MCF 10A (cell line): ENCODE measurements at regions of chr9 and their contacts with region 1.

Region 1: DNA sequence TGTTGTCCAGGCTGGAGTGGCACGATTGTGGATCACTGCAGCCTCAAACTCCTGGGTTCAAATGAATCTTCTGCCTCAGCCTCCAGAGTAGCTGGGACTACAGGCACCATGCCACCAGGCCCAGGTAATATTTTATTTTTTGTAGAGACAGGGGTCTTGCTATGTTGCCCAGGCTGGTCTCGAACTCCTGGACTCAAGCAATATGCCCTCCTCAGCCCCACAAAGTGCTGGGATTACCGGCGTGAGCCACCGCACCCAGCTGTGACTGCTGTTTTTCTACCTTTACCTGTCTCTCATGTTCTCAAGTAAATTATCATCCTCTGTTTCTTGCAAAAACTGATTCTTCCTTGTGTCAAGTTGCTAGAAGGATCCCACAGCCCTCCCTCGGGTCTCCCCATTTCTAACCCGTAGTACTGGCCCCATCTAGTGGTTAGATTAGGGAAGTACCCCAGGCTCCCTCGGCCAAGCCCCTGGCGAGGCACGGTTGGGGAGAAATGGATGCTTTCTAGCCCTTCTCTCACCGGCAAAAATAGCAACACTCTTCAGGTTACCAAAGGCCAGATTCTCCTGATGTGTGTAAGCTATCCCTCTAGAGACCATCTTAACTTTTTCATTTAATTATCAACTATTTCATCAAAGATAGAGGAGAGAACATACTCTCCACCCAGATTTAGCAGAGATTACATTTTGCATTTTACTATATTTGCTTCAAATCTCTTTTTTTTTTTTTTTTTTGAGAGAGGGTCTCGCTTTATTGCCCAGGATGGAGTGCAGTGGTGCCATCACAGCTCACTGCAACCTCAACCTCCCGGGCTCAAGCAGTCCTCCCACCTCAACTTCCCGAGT is 19.2 kb upstream of the TOR1B start:
- DNase-seq: peak; percentile 82
- H3K4me3 Mint-ChIP-seq: no peak overlapping the region
- H3K27ac Mint-ChIP-seq: no peak overlapping the region
- H3K4me1 Mint-ChIP-seq: peaks cover 13% of the 10 kb centered on the region
- H3K27me3 Mint-ChIP-seq: peaks cover 8% of the 10 kb centered on the region
- CTCF ChIP-seq: peak; percentile 95

Region 2: GRCh38 chr9:129641746-129642513 is 141.8 kb before region 1 on chr9 and contains the start of gene ASB6:
- CTCF ChIA-PET with region 1: interaction called, 45 read pairs
- POLR2A ChIA-PET with region 1: interaction called, 3 read pairs
- intact Hi-C with region 1: loop called (anchors 1 kb)
- DNase-seq: peak; percentile 93
- H3K4me3 Mint-ChIP-seq: peak within 1 kb of the TSS; percentile 87
- H3K27ac Mint-ChIP-seq: peak within 1 kb of the TSS; percentile 79
- H3K4me1 Mint-ChIP-seq: peaks cover 12% of the 10 kb centered on the region
- H3K27me3 Mint-ChIP-seq: no peaks in the 10 kb centered on the region
- CTCF ChIP-seq: peak; percentile 97
- total RNA-seq, gene ASB6: 14.4 TPM in 2 replicates

Region 3: DNA sequence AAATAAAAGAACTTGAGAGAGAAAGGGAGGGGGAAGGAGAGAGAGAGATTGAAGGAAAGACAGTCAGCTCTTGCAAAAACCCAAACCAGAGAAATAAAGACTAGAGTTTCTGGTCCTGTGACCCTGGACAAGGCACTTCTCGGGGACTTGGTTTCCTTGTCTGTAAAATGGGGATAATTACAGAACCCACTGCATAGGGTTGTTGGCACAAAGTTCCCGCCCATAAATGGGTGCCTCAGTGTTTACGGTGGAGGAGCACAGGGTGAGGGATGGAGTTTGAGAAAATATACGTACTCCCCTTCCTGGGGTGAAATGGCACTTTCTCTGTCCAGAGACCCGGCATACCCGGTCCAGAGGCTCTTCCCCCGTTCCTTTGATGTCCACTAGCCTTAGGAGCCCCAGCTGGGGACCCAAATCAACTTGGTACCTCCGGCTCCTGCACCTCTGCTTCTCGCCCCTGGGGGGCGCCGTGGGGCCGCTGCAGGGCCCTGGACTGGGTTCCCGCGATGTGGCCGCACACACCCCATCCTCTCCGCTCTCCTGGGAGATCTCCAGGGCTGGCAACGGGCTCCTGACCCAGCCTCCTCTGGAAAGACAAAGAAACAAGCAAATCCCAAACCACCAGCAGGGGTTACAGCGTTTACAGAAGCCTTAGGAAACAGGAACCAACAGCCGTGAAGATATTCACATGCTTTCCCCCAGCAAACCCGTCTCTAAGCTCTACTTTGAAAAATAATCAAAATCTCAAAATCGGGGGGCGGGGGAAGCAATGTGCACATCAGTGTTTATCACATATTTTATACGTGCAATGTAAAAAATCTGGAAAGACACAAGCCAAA is 57.2 kb before region 1 on chr9:
- CTCF ChIA-PET with region 1: interaction called, 105 read pairs
- POLR2A ChIA-PET with region 1: interaction called, 9 read pairs
- intact Hi-C with region 1: loop called (anchors 1 kb)
- DNase-seq: peak; percentile 79
- H3K4me3 Mint-ChIP-seq: no peak overlapping the region
- H3K27ac Mint-ChIP-seq: no peak overlapping the region
- H3K4me1 Mint-ChIP-seq: no peaks in the 10 kb centered on the region
- H3K27me3 Mint-ChIP-seq: no peaks in the 10 kb centered on the region
- CTCF ChIP-seq: peak; percentile 92

Region 4: DNA sequence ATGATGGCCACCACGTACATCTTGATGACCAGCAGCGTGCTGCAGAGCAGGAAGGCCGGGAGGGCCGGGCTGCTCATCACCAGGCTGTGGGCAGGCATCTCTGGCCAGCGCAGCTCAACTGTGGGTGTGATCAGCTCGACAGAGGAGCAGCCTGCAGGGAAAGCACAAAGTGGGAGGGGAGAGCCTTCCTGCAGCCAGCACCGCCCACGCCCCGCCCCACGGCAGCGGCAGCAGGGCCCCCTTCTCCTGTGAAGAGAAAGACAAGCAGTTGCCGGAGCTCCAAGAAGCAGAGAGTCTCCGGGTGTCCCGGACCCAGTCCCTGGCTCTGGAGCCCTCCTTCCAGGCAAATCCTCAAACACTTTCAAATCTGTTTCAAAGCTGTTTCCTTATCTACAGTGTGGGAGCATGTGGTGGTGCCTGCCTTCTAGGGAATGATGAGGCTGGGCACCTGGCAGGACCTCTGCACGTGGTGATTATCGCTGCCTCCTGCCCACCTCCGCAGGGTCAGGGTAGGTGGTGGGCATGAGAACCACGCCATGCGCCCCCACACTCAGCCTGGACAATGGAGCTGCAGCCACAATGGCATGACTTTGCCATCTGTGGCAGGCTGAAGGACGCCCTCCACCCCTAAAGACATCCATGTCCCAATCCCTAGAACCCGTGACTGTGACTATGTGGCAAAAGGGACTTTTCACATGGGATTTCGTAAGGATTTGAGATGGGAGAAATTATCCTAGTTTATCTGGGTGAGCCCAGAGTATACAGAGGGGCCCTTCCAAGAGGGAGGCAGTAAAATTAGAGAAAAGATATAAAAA is 30.6 kb before region 1 on chr9 and contains the start of gene PTGES:
- CTCF ChIA-PET with region 1: interaction called, 30 read pairs
- POLR2A ChIA-PET with region 1: interaction called, 293 read pairs
- intact Hi-C with region 1: no loop called
- DNase-seq: peak; percentile 90
- H3K4me3 Mint-ChIP-seq: peak within 1 kb of the TSS; percentile 93
- H3K27ac Mint-ChIP-seq: peak within 1 kb of the TSS; percentile 82
- H3K4me1 Mint-ChIP-seq: peaks cover 22% of the 10 kb centered on the region
- H3K27me3 Mint-ChIP-seq: no peaks in the 10 kb centered on the region
- CTCF ChIP-seq: no peak
- total RNA-seq, gene PTGES: 74.0 and 96.6 TPM in 2 replicates

Region 5: DNA sequence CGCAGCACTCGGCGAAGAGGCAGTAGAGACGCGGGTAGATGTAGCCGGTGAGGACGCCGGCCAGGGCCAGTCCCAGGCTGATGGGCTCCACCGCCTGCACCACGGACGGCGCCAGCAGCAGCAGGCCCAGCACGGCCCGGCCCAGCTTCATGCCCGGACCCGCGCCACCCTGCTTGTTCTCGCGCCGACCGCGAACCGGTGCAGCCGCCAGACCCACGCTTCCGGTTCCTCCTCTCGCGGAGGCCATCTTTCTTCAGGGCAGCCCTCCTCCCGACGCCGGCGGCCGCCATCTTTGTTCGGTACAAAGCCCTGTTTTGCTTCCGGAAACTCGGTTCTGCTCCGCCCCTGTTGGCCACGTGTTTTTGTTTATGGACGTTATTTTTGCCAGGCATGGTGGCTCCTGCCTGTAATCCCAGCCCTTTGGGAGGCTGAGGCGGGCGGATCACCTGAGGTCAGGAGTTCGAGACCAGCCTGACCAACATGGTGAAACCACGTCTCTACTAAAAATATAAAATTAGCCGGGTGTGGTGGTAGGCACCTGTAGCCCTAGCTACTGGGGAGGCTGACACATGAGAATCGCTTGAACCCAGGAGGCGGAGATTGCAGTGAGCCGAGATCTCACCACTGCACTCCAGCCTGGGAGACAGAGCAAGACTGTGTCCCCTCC is 40.3 kb after region 1 on chr9 and contains the start of gene TOR1A:
- CTCF ChIA-PET with region 1: no interaction called
- POLR2A ChIA-PET with region 1: no interaction called
- intact Hi-C with region 1: no loop called
- DNase-seq: peak; percentile 94
- H3K4me3 Mint-ChIP-seq: peak within 1 kb of the TSS; percentile 76
- H3K27ac Mint-ChIP-seq: peak within 1 kb of the TSS; percentile 77
- H3K4me1 Mint-ChIP-seq: no peaks in the 10 kb centered on the region
- H3K27me3 Mint-ChIP-seq: no peaks in the 10 kb centered on the region
- CTCF ChIP-seq: no peak
- total RNA-seq, gene TOR1A: 33.6 and 40.4 TPM in 2 replicates